Activated T-helper 1 cell treated with anti-CD3 and anti-CD28 coated beads, Interleukin-12 subunit alpha, Interleukin-12 subunit beta, Interleukin-2, Interleukin-4 antibody, amounts not matched to agents 30 ng/mL and 10 ng/mL and 1 ng/mL, durations not matched to agents 14 hours and 24 hours and 36 hours (primary cell): ENCODE measurements at regions of chr12 and their contacts with region 1.

Region 1: DNA sequence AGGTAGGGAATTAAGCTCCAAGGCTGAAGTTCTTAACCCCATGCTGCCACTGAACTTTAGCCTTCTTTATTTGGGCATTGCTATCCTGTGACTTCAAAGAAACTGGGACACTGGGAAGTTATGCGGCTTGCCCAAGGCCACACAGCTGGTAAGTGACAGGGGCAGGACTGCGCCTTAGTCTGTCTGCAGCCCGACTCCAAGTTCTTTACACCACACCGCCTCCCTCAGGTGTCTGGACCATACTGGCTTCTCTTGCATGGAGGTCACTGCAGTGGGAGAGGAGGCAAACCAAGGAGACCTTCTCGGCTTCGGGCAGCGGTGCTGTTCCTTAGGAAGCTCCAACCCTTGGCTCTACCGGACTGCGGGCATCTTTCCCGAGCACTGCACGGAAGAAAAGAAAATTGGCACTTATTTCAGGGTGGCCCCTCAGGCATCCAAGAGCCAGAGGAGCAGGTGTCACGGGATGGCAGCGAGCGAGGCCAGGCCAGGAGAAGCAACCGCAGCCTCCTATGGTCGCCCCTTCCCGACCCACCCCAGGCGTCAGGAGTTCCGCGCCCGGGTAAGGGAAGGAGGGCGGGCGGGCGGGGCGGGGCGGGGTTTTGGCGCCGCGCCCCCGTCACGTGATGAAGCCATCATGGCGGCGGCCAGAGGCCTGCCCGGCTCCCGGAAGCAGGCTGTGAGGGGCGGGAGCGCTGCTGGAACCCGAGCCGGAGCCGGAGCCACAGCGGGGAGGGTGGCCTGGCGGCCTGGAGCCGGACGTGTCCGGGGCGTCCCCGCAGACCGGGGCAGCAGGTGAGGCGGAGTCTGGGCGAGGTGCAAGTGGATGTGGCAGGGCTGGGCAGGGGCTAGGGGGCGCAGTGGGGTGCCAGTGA is 16.4 kb upstream of the ESPL1 start:
- DNase-seq: peak; percentile 69
- H3K4me3 Mint-ChIP-seq: peak overlapping the region; percentile 99
- H3K27ac Mint-ChIP-seq: peak overlapping the region; percentile 88
- H3K4me1 Mint-ChIP-seq: peaks cover 50% of the 10 kb centered on the region
- H3K27me3 Mint-ChIP-seq: peaks cover 2% of the 10 kb centered on the region

Region 2: DNA sequence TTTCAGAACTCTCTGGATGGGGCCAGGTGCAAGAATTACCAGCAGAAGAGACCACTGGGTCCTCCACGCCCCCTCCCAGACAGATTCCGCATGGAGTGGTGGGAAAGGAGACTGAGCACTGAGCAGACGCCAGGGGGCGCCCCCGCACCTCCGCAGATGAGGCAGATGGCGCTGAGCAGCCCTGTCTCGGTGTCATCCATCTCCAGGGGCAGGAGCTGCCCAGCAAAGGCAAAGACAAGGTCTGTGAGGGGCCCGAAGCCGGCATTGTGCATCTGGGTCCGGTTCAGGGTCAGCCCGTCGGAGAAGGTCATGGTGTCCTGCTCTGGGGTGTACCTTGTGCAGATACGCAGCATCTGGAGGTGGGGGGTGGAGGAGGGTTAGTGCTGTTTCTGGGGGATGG is 38.4 kb before region 1 on chr12:
- intact Hi-C with region 1: loop called (anchors 1 kb)
- DNase-seq: peak; percentile 75
- H3K4me3 Mint-ChIP-seq: no peak overlapping the region
- H3K27ac Mint-ChIP-seq: peak overlapping the region; percentile 11
- H3K4me1 Mint-ChIP-seq: peaks cover 78% of the 10 kb centered on the region
- H3K27me3 Mint-ChIP-seq: no peaks in the 10 kb centered on the region

Region 3: GRCh38 chr12:53231826-53232645 is 19.7 kb before region 1 on chr12 and contains the start of gene RARG:
- intact Hi-C with region 1: loop called (anchors 1 kb)
- DNase-seq: peak; percentile 42
- H3K4me3 Mint-ChIP-seq: peak within 1 kb of the TSS; percentile 88
- H3K27ac Mint-ChIP-seq: peak within 1 kb of the TSS; percentile 88
- H3K4me1 Mint-ChIP-seq: peaks cover 78% of the 10 kb centered on the region
- H3K27me3 Mint-ChIP-seq: no peaks in the 10 kb centered on the region
- total RNA-seq, gene RARG: 58.6 and 61.6 TPM in 2 replicates

Region 4: DNA sequence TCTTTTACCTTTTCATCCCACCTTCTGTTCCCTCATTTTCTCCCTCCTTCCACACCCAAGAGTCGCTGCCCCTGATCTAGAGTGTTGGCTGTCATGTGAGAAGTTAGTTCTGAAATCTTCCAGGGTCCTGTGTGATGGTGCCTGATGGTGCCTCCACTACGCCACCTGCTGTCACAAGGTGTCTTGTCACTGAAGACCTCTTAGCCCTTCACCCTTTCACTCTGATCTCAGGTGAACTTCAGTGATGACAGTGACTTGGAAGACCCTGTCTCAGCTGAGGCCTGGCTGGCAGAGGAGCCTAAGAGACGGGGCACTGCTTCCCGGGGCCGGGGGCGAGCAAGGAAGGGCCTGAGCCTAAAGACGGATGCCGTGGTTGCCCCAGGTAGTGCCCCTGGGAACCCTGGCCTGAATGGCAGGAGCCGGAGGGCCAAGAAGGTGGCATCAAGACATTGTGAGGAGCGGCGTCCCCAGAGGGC is 36.1 kb after region 1 on chr12:
- intact Hi-C with region 1: loop called (anchors 1 kb)
- DNase-seq: peak; percentile 51
- H3K4me3 Mint-ChIP-seq: no peak overlapping the region
- H3K27ac Mint-ChIP-seq: peak overlapping the region; percentile 60
- H3K4me1 Mint-ChIP-seq: peaks cover 7% of the 10 kb centered on the region
- H3K27me3 Mint-ChIP-seq: no peaks in the 10 kb centered on the region

Region 5: GRCh38 chr12:53295070-53295890 is 43.6 kb after region 1 on chr12 and contains the start of gene PFDN5:
- intact Hi-C with region 1: loop called (anchors 1 kb)
- DNase-seq: peak; percentile 86
- H3K4me3 Mint-ChIP-seq: peak within 1 kb of the TSS; percentile 99
- H3K27ac Mint-ChIP-seq: peak within 1 kb of the TSS; percentile 91
- H3K4me1 Mint-ChIP-seq: peaks cover 50% of the 10 kb centered on the region
- H3K27me3 Mint-ChIP-seq: no peaks in the 10 kb centered on the region
- total RNA-seq, gene PFDN5: 344 and 350 TPM in 2 replicates